ENCODE measurements at regions of chr19 and their contacts with region 1.

Region 1: GRCh38 chr19:5719961-5720790 is at the starts of genes CATSPERD and LONP1:
- DNase-seq: peak; percentile 99
- ATAC-seq: peak; percentile 97
- total RNA-seq, gene CATSPERD: not detected
- total RNA-seq, gene LONP1: 90.7 TPM

Region 2: GRCh38 chr19:5536337-5536894 is 183.8 kb before region 1 on chr19:
- intact Hi-C with region 1: no loop called
- DNase-seq: peak; percentile 90
- ATAC-seq: peak; percentile 90

Region 3: GRCh38 chr19:5767949-5768348 is 47.8 kb after region 1 on chr19:
- intact Hi-C with region 1: no loop called
- DNase-seq: no peak
- ATAC-seq: no peak

Region 4: DNA sequence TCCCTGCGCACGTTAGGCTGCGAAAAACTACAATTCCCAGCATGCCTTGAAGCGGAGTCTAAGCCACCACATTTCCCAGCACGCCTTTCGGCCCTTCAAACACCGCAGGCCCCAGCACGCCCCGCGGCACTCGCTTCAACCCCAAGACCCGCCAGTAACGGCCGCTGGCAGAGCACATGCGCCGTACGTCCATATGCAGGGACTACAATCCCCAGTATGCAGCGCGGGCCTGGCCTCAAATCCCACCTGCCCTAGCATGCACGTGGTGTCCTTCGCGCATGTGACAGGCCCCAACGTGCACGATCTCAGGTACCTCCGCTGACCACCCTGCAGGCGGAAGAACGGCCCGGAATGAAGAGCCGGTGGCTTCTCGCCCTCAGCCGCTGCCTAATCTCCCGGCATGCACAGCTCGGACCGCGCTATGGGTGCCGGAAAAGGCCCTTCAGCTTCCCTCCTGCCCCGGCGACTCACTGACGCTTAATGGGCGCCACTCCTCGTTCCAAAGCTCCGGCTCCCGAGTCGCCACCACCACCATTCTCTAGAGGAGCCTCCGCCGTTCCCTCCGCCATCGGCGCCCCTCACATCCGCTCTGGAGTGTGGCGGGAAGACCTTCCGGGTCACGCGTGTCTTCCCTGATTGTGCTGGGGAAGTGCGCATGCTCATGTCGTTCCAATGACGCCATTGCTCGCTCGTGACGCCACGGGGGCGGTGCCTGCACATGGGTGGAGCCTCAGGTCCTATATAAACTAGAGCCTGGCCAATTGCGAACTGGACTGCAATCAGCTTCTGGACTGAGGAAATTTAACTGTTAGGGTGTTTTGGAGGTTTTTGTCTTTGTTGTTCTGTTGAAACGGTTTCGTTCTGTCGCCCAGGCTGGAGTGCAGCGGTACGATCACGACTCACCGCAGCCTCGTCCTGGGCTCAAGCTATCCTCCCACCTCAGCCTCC is 70.7 kb after region 1 on chr19 and contains the start of gene DUS3L:
- intact Hi-C with region 1: loop called (anchors 5 kb)
- DNase-seq: peak; percentile 98
- ATAC-seq: peak; percentile 96
- total RNA-seq, gene DUS3L: 14.3 TPM

Region 5: DNA sequence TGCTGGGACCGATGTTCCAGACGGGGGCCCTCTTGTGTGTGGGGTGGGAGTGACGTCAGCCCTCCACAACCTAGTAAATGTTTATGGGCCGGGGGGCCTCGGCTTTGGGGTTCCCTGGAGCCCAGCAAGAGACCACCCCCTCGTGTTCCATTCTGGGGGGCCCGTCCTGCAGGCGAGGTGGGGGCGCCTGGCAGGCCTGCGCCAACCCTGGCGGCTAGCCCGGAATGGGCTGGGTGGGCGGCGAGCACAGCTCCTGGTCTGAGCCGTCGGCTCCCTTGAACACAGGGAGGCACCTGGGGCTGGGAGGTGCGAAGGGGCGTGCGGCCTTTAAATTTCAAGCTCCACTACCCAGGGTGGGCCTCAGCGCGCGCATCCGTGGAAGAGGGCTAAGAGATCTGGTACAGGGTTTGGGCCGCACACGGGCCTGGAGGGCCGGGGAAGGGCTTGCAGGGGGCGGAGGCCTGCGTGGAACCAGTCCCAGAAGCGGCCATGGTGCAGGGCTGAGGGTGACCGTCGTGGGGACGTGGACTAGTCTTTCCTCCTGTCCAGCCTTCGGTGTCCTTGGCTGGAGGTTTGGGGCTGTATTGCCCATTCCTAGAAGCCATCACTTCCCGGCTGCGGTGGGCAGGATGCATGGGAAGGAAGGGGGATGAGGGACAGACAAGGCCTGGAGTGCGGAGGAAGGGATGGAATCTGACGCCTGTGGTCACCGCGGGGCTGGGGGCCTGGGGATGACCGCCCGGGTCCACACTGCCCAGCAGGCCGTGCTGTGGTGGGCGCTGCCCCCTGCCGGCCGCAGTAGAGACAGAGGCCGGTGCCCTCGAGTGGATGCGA is 172.0 kb after region 1 on chr19:
- intact Hi-C with region 1: no loop called
- DNase-seq: peak; percentile 72
- ATAC-seq: peak; percentile 47

Measured in left ventricle myocardium superior (tissue), 1 donor.